ENCODE measurements at regions of chr5 and their contacts with region 1.

Region 1: DNA sequence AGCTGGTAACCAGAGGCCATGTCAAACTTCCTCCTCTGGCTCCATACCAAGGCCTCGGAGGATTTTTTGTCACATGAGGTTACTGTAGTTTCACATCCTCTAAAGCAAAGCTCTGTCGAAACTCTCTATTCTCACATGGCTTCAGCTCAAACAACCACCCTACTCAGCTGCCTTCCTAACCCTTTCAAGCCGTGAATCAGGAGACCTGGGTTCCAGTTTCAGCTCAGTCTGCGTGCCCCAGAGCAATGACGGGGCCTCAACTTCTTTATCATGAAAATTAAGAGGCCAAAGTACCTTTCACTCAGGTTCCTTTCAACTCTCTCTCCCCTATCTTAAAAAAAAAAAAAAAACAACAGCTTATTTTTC is 145.2 kb upstream of the MAP3K1 start:
- DNase-seq: peak in 4 of 5 donors; percentile 26 to 67 (median 48)
- H3K4me3 ChIP-seq: no peak overlapping the region
- H3K4me3 Mint-ChIP-seq: peak overlapping the region in 7 of 8 donors; percentile 54 to 89 (median 76)
- H3K27ac ChIP-seq: peak overlapping the region; percentile 48
- H3K27ac Mint-ChIP-seq: peak overlapping the region; percentile 89 to 97 (median 93)
- H3K4me1 ChIP-seq: peaks cover 54% of the 10 kb centered on the region
- H3K4me1 Mint-ChIP-seq: peaks cover 23 to 52% (median 44%) of the 10 kb centered on the region in 4 donors
- H3K27me3 ChIP-seq: no peaks in the 10 kb centered on the region
- H3K27me3 Mint-ChIP-seq: no peaks in the 10 kb centered on the region

Region 2: GRCh38 chr5:56575821-56576220 is 94.3 kb before region 1 on chr5:
- CTCF ChIA-PET with region 1: no interaction called
- POLR2A ChIA-PET with region 1: no interaction called
- intact Hi-C with region 1: loop called (anchors 5 kb)
- DNase-seq: no peak
- H3K4me3 ChIP-seq: no peak overlapping the region
- H3K4me3 Mint-ChIP-seq: no peak overlapping the region
- H3K27ac ChIP-seq: no peak overlapping the region
- H3K27ac Mint-ChIP-seq: no peak overlapping the region
- H3K4me1 ChIP-seq: no peaks in the 10 kb centered on the region
- H3K4me1 Mint-ChIP-seq: peaks cover 0 to 2% (median under 1%) of the 10 kb centered on the region in 4 donors
- H3K27me3 ChIP-seq: no peaks in the 10 kb centered on the region
- H3K27me3 Mint-ChIP-seq: peaks cover 0 to 1% of the 10 kb centered on the region in 2 donors